HEK293 (cell line): ENCODE measurements at regions of chr2 and their contacts with region 1.

Region 1: DNA sequence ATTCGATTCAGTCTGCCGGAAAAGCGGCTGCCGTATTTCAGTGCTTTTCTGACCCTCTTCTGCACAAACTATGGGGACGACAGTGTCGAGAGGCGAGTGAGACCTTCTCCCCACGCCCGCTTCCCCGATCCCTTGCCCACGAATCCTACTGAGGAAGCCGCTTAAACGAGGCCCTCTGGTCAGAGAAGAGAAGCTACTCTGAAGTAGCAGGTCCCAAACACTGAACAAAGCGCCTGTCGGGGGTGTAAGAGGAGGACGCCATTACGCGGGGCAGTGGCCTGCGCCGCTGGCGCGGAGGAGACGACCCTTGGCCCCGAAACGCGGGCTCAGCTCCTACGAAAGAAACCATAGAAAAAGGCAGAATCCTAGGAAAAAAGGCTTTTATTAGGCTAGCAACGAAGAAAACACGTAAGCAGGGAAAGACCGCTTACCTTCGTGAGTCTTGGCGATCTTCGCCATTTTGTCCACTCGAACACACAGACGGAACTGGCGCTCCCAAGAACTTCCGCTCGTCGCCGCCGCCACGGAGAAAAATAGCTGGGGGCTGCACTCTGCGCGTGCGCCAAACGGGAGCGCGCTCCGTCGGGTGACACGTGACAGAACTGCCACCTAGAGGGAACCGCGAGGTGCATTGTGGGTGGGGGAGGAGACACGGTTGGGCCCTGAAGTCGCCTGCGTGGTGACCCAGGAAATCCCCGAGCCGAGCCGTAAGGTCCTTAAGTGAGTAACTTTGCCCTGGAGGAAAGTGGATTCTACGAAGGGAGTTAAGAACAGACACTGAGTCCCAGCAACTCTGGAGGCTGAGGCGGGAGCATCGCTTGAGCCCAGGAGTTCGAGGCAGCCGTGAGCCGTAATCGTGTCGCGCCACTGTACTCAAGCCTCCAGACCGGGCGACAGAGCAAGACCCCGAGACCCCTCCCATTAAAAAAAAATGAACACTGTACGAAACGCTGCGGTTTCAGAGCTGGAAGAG is at the start of gene SF3B1:
- H3K4me3 ChIP-seq: peak within 1 kb of the TSS; percentile 94
- H3K27ac ChIP-seq: peak within 1 kb of the TSS; percentile 94
- H3K4me1 ChIP-seq: peaks cover 17% of the 10 kb centered on the region
- CTCF ChIP-seq: no peak

Region 2: GRCh38 chr2:197453161-197453914 is 18.5 kb after region 1 on chr2 and contains the start of gene COQ10B:
- CTCF ChIA-PET with region 1: interaction called, 4 read pairs
- POLR2A ChIA-PET with region 1: interaction called, 69 read pairs
- H3K4me3 ChIP-seq: peak within 1 kb of the TSS; percentile 93
- H3K27ac ChIP-seq: peak within 1 kb of the TSS; percentile 93
- H3K4me1 ChIP-seq: no peaks in the 10 kb centered on the region
- CTCF ChIP-seq: peak; percentile 92

Region 3: GRCh38 chr2:197515739-197516392 is 81.0 kb after region 1 on chr2 and contains the start of gene MOB4:
- CTCF ChIA-PET with region 1: no interaction called
- POLR2A ChIA-PET with region 1: interaction called, 12 read pairs
- H3K4me3 ChIP-seq: peak within 1 kb of the TSS; percentile 99
- H3K27ac ChIP-seq: peak within 1 kb of the TSS; percentile 87
- H3K4me1 ChIP-seq: peaks cover 2% of the 10 kb centered on the region; the same call in 1 of the 2 replicates
- CTCF ChIP-seq: peak; percentile 72